CD8-positive, alpha-beta T cell (primary cell): ENCODE measurements at regions of chr6 and their contacts with region 1.

Region 1: DNA sequence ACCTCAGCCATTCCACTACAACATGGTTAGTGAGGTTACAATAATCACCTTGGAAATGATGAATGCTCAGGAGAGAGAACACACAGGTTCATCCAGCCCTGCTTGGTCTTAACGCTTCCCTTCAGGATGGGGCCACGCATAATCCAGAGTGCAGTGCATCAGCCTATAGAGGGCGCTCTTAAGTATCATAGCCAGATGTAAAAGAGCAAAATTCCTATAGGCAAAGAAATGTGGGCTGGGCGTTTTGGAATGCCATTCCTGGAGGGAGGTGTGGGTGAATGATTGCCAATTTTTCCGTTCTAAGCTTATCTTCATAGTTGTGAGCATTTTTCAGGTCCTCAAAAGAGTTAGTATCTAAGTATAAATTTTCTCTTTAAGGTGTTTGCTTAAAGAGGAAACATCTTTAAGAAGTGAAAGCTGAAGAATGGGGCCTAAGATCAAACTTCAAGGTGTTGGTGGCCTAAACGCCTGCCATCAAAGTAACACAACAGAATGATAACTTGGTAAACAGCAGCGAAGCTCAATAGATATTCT is 1.8 kb downstream of the RIPOR2 start:
- DNase-seq: peak in 7 of 9 experiments; percentile 40 to 82 (median 59)
- ATAC-seq: no peak
- H3K4me3 ChIP-seq: peak overlapping the region; percentile 68 to 89
- H3K4me3 Mint-ChIP-seq: peak overlapping the region; percentile 97
- H3K27ac ChIP-seq: peak overlapping the region; percentile 73 to 80
- H3K27ac Mint-ChIP-seq: peak overlapping the region; percentile 95
- H3K4me1 ChIP-seq: peaks cover 49% of the 10 kb centered on the region
- H3K4me1 Mint-ChIP-seq: peaks cover 62% of the 10 kb centered on the region
- H3K27me3 ChIP-seq: no peaks in the 10 kb centered on the region
- H3K27me3 Mint-ChIP-seq: no peaks in the 10 kb centered on the region
- CTCF ChIP-seq: peak; percentile 96

Region 2: GRCh38 chr6:24848461-24848860 is 85.5 kb before region 1 on chr6:
- CTCF ChIA-PET with region 1: interaction called, 12 read pairs
- POLR2A ChIA-PET with region 1: interaction called, 3 read pairs
- intact Hi-C with region 1: no loop called
- DNase-seq: no peak
- ATAC-seq: no peak
- H3K4me3 ChIP-seq: no peak overlapping the region
- H3K4me3 Mint-ChIP-seq: no peak overlapping the region
- H3K27ac ChIP-seq: no peak overlapping the region
- H3K27ac Mint-ChIP-seq: peak overlapping the region; percentile 87
- H3K4me1 ChIP-seq: peaks cover 12% of the 10 kb centered on the region
- H3K4me1 Mint-ChIP-seq: peaks cover 49% of the 10 kb centered on the region
- H3K27me3 ChIP-seq: no peaks in the 10 kb centered on the region
- H3K27me3 Mint-ChIP-seq: no peaks in the 10 kb centered on the region
- CTCF ChIP-seq: no peak

Region 3: GRCh38 chr6:24883618-24884017 is 50.3 kb before region 1 on chr6:
- CTCF ChIA-PET with region 1: interaction called, 11 read pairs
- POLR2A ChIA-PET with region 1: interaction called, 4 read pairs
- intact Hi-C with region 1: no loop called
- DNase-seq: peak in 2 of 9 experiments; percentile 33 to 48
- ATAC-seq: peak; percentile 60
- H3K4me3 ChIP-seq: no peak overlapping the region
- H3K4me3 Mint-ChIP-seq: peak overlapping the region; percentile 67
- H3K27ac ChIP-seq: peak overlapping the region in 1 of 2 experiments; percentile 52
- H3K27ac Mint-ChIP-seq: peak overlapping the region; percentile 94
- H3K4me1 ChIP-seq: peaks cover 84% of the 10 kb centered on the region
- H3K4me1 Mint-ChIP-seq: peaks cover 87% of the 10 kb centered on the region
- H3K27me3 ChIP-seq: no peaks in the 10 kb centered on the region
- H3K27me3 Mint-ChIP-seq: no peaks in the 10 kb centered on the region
- CTCF ChIP-seq: no peak

Region 4: GRCh38 chr6:24919004-24919892 is 14.7 kb before region 1 on chr6:
- CTCF ChIA-PET with region 1: interaction called, 161 read pairs
- POLR2A ChIA-PET with region 1: interaction called, 60 read pairs
- intact Hi-C with region 1: loop called in 1 of 2 experiments (anchors 1 kb)
- DNase-seq: peak in 1 of 9 experiments; percentile 53
- ATAC-seq: peak; percentile 36
- H3K4me3 ChIP-seq: peak overlapping the region; percentile 2 to 29
- H3K4me3 Mint-ChIP-seq: peak overlapping the region; percentile 69
- H3K27ac ChIP-seq: peak overlapping the region; percentile 2 to 51
- H3K27ac Mint-ChIP-seq: peak overlapping the region; percentile 92
- H3K4me1 ChIP-seq: peaks cover 94% of the 10 kb centered on the region
- H3K4me1 Mint-ChIP-seq: peaks cover 92% of the 10 kb centered on the region
- H3K27me3 ChIP-seq: no peaks in the 10 kb centered on the region
- H3K27me3 Mint-ChIP-seq: no peaks in the 10 kb centered on the region
- CTCF ChIP-seq: no peak

Region 5: GRCh38 chr6:24968786-24969185 is 34.9 kb after region 1 on chr6:
- CTCF ChIA-PET with region 1: interaction called, 70 read pairs
- POLR2A ChIA-PET with region 1: interaction called, 11 read pairs
- intact Hi-C with region 1: loop called in 1 of 2 experiments (anchors 2 kb)
- DNase-seq: peak in 2 of 9 experiments; percentile 30 to 52
- ATAC-seq: peak; percentile 70
- H3K4me3 ChIP-seq: no peak overlapping the region
- H3K4me3 Mint-ChIP-seq: no peak overlapping the region
- H3K27ac ChIP-seq: peak overlapping the region in 1 of 2 experiments; percentile 62
- H3K27ac Mint-ChIP-seq: peak overlapping the region; percentile 41
- H3K4me1 ChIP-seq: peaks cover 50% of the 10 kb centered on the region
- H3K4me1 Mint-ChIP-seq: peaks cover 84% of the 10 kb centered on the region
- H3K27me3 ChIP-seq: no peaks in the 10 kb centered on the region
- H3K27me3 Mint-ChIP-seq: no peaks in the 10 kb centered on the region
- CTCF ChIP-seq: no peak

Region 6: GRCh38 chr6:25006565-25007001 is 72.6 kb after region 1 on chr6:
- CTCF ChIA-PET with region 1: interaction called, 17 read pairs
- POLR2A ChIA-PET with region 1: interaction called, 4 read pairs
- intact Hi-C with region 1: no loop called
- DNase-seq: peak in 5 of 9 experiments; percentile 29 to 66 (median 43)
- ATAC-seq: peak; percentile 63
- H3K4me3 ChIP-seq: peak overlapping the region in 1 of 2 experiments; percentile 3
- H3K4me3 Mint-ChIP-seq: peak overlapping the region; percentile 20
- H3K27ac ChIP-seq: peak overlapping the region; percentile 29 to 85
- H3K27ac Mint-ChIP-seq: peak overlapping the region; percentile 84
- H3K4me1 ChIP-seq: peaks cover 64% of the 10 kb centered on the region
- H3K4me1 Mint-ChIP-seq: peaks cover 78% of the 10 kb centered on the region
- H3K27me3 ChIP-seq: no peaks in the 10 kb centered on the region
- H3K27me3 Mint-ChIP-seq: no peaks in the 10 kb centered on the region
- CTCF ChIP-seq: no peak

Region 7: GRCh38 chr6:26537846-26538571 is 1604.1 kb after region 1 on chr6 and contains the start of gene HMGN4:
- CTCF ChIA-PET with region 1: no interaction called
- POLR2A ChIA-PET with region 1: no interaction called
- intact Hi-C with region 1: loop called in 1 of 2 experiments (anchors 10 kb)
- DNase-seq: peak; percentile 65 to 96 (median 79)
- ATAC-seq: peak; percentile 69
- H3K4me3 ChIP-seq: peak within 1 kb of the TSS; percentile 66 to 99
- H3K4me3 Mint-ChIP-seq: peak within 1 kb of the TSS; percentile 89
- H3K27ac ChIP-seq: peak within 1 kb of the TSS; percentile 88 to 93
- H3K27ac Mint-ChIP-seq: peak within 1 kb of the TSS; percentile 92
- H3K4me1 ChIP-seq: peaks cover 32% of the 10 kb centered on the region
- H3K4me1 Mint-ChIP-seq: peaks cover 58% of the 10 kb centered on the region
- H3K27me3 ChIP-seq: no peaks in the 10 kb centered on the region
- H3K27me3 Mint-ChIP-seq: no peaks in the 10 kb centered on the region
- CTCF ChIP-seq: no peak
- total RNA-seq, gene HMGN4: 24.8 to 33.7 TPM